Activated CD8-positive, alpha-beta T cell treated with anti-CD3 and anti-CD28 coated beads, Interleukin-2, amount 10 ng/mL, durations not matched to agents 7 days and 5 days (primary cell): ENCODE measurements at regions of chr14 and their contacts with region 1.

Region 1: GRCh38 chr14:22766456-22767322 is at the start of gene OXA1L:
- DNase-seq: peak; percentile 98
- ATAC-seq: peak; percentile 94
- H3K4me3 Mint-ChIP-seq: peak within 1 kb of the TSS; percentile 93
- H3K27ac Mint-ChIP-seq: peak within 1 kb of the TSS; percentile 97
- H3K4me1 Mint-ChIP-seq: peaks cover 33% of the 10 kb centered on the region
- H3K27me3 Mint-ChIP-seq: no peaks in the 10 kb centered on the region
- total RNA-seq, gene OXA1L: 104 to 107 TPM

Region 2: GRCh38 chr14:22535916-22536315 is 230.8 kb before region 1 on chr14:
- CTCF ChIA-PET with region 1: no interaction called
- POLR2A ChIA-PET with region 1: no interaction called
- DNase-seq: peak; percentile 52
- ATAC-seq: no peak
- H3K4me3 Mint-ChIP-seq: peak overlapping the region; percentile 75
- H3K27ac Mint-ChIP-seq: peak overlapping the region; percentile 74
- H3K4me1 Mint-ChIP-seq: peaks cover 93% of the 10 kb centered on the region
- H3K27me3 Mint-ChIP-seq: no peaks in the 10 kb centered on the region

Region 3: GRCh38 chr14:22589096-22589839 is 177.4 kb before region 1 on chr14 and contains the start of gene DAD1:
- CTCF ChIA-PET with region 1: interaction called, 3 read pairs
- POLR2A ChIA-PET with region 1: interaction called, 13 read pairs
- DNase-seq: peak; percentile 100
- ATAC-seq: peak; percentile 91
- H3K4me3 Mint-ChIP-seq: peak within 1 kb of the TSS; percentile 99
- H3K27ac Mint-ChIP-seq: peak within 1 kb of the TSS; percentile 100
- H3K4me1 Mint-ChIP-seq: peaks cover 55% of the 10 kb centered on the region
- H3K27me3 Mint-ChIP-seq: peaks cover 8% of the 10 kb centered on the region
- total RNA-seq, gene DAD1: 130 to 147 TPM

Region 4: DNA sequence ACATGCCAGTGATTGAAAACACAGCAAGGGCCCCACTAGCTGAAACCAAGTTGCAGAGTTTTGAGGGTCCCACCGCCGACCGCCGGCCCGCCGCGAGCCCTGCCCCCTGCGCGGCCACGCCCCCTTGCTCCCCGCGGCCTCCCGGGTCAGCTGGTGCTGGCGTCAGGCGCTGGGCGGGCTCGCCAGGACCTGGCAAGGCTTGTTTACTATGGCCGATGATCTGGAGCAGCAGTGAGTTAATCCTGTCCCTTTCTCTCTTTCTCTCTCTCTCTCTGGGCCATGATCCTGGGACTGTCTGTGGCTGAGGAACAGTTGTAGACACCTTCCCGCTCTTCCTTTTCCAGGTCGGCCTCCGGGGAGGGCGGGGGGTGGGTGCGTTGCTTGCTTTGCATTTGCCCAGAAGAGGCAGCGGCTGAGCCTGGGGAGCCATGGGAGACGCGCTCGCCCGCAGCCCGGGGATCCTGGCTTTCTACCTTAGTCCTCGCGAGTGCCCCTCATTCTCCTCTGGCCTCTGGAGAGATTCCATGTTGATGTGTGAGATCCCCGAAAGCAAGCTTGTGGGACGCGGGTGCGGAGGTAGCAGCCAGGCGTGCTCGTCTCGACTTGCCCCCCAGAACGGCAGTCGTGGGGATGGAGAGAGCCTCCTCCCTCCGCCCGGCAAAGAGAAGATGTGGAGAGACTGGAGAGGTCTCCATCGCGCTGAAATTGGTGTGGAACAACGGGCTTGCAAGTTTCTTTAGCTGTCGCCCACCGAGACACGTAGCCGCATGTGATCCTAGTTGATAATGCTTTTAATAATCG is 168.4 kb before region 1 on chr14 and contains the start of gene ABHD4:
- CTCF ChIA-PET with region 1: no interaction called
- POLR2A ChIA-PET with region 1: interaction called, 10 read pairs
- DNase-seq: peak; percentile 77
- ATAC-seq: peak; percentile 91
- H3K4me3 Mint-ChIP-seq: peak within 1 kb of the TSS; percentile 92
- H3K27ac Mint-ChIP-seq: peak within 1 kb of the TSS; percentile 84
- H3K4me1 Mint-ChIP-seq: peaks cover 30% of the 10 kb centered on the region
- H3K27me3 Mint-ChIP-seq: peaks cover 19% of the 10 kb centered on the region
- total RNA-seq, gene ABHD4: 8.0 to 8.5 TPM

Region 5: DNA sequence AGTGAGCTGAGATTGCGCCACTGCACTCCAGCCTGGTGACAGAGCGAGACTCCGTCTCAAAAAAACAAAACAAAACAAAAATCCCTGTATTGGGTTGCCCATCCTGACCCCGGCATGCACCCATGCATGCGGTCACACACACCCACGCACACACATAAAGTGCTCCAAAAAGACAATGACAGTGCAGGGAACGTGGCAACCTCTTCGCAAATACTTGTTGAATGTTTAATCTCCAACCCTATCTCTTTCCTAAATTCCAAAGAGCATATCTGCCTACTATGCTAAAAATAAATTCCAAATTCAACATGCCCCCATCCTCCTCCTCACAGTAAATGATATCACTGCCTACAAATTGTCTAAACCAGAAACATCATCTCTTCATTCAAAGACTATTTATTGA is 35.0 kb after region 1 on chr14:
- CTCF ChIA-PET with region 1: no interaction called
- POLR2A ChIA-PET with region 1: no interaction called
- DNase-seq: no peak
- ATAC-seq: no peak
- H3K4me3 Mint-ChIP-seq: no peak overlapping the region
- H3K27ac Mint-ChIP-seq: no peak overlapping the region
- H3K4me1 Mint-ChIP-seq: no peaks in the 10 kb centered on the region
- H3K27me3 Mint-ChIP-seq: peaks cover 36% of the 10 kb centered on the region

Region 6: DNA sequence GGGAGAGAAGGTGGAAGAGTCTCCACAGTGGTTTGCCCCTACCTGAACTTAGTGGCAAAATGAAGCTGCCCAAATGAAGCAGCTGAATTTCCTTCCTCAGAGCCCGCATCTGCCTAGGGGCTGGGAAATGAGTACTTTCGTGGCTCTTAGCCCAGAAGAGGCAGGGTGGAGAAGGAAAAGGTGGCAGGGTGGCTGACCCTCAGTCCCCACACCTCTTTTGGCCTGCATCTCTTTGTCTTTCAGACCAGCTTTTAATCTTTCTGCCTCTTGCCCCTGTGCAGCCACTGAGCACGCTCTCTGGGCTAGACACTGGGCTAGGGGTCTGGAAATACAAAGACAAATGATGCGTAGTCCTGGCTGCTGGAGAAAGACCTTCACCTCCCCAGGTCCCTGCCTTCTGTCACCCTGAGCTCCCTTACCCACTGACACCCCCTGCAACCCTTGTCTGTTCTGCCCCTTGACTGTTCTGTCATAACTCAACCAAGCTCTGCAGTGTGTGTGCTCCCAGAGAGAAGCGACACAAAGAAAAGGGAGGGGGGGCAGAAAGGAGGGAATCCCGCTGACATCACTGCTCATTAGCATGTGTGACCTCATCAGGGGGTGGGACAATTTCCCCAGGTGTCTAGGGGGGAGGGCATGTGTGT is 116.0 kb after region 1 on chr14:
- CTCF ChIA-PET with region 1: no interaction called
- POLR2A ChIA-PET with region 1: no interaction called
- DNase-seq: no peak
- ATAC-seq: no peak
- H3K4me3 Mint-ChIP-seq: no peak overlapping the region
- H3K27ac Mint-ChIP-seq: no peak overlapping the region
- H3K4me1 Mint-ChIP-seq: peaks cover 19% of the 10 kb centered on the region
- H3K27me3 Mint-ChIP-seq: peaks cover 29% of the 10 kb centered on the region